Common myeloid progenitor, CD34-positive (primary cell): ENCODE measurements at regions of chr17 and their contacts with region 1.

Region 1: DNA sequence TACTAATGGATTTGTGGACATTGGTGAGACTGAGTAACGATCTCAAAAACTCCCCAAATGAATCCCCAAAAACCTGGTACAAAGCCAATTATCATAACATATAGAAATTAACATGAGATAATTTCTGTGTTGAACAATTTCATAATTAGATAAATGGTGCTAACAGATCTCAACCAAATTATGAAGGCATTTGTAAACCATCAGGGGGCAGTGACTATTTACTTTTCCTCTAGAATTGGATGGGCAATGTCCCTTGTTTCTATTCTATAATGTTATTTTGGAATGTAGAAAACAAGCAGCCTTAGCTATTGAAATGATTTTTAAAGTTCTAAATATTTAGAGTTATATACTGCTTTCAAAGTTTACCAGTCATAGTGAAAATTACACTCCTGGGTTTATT is 57.8 kb downstream of the MYH10 start:
- DNase-seq: peak; percentile 34 to 72 (median 64)
- H3K4me3 ChIP-seq: no peak overlapping the region
- H3K27ac ChIP-seq: no peak overlapping the region
- H3K4me1 ChIP-seq: no peaks in the 10 kb centered on the region
- H3K27me3 ChIP-seq: no peaks in the 10 kb centered on the region

Region 2: DNA sequence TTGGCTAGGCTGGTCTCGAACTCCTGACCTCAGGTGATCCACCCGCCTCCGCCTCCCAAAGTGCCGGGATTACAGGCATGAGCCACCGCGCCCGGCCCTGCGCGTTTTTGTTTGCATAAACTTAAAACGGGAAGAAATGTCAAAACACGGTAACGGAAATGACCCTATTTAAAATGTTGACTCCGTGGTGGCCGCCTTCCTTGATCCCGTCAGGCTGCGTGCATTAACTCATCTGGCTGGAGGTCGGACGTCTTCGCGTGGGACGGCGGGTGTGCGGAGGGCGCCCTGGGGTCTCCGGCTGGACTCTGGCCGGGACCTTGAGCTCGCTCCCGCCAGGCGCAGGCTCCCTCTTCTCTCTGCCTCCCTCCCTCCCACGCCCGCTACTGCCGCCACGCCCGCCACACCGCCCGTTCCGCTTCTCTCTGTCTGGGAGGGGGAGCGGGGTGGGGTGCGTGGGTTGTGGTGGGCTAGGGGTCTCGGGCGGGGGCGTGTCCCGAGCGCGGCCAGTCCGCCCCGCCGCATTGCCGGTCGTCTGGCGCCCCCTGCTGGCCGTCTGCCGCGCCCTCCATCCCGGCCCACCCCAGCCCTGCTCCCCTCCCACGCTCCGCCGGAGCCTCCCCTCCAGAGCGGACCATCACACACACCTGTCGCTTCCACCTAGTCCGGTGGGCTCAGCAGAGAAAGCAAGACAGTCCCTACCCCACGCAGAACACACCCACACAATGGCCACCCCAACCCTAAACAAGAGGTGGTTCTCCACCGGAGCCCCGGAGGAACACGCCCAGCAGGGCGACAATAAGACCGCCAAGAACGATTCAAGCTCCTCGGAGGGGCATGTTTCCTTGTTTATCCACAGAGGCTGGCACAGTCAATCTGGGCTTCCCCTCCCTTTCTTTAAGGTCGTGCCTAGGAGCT is 173.1 kb after region 1 on chr17:
- CTCF ChIA-PET with region 1: interaction called, 28 read pairs
- POLR2A ChIA-PET with region 1: no interaction called
- DNase-seq: peak; percentile 84 to 91 (median 89)
- H3K4me3 ChIP-seq: peak overlapping the region; percentile 37 to 85 (median 68)
- H3K27ac ChIP-seq: no peak overlapping the region
- H3K4me1 ChIP-seq: peaks cover 3 to 26% (median 13%) of the 10 kb centered on the region in 4 experiments
- H3K27me3 ChIP-seq: peaks cover 0 to 8% (median 0%) of the 10 kb centered on the region in 5 experiments